BJ (cell line): ENCODE measurements at regions of chr15 and their contacts with region 1.

Region 1: GRCh38 chr15:94119923-94120775 is 111.2 kb upstream of the MCTP2 start:
- DNase-seq: peak; percentile 39
- H3K4me3 ChIP-seq: no peak overlapping the region
- H3K27me3 ChIP-seq: no peaks in the 10 kb centered on the region
- CTCF ChIP-seq: peak; percentile 94

Region 2: DNA sequence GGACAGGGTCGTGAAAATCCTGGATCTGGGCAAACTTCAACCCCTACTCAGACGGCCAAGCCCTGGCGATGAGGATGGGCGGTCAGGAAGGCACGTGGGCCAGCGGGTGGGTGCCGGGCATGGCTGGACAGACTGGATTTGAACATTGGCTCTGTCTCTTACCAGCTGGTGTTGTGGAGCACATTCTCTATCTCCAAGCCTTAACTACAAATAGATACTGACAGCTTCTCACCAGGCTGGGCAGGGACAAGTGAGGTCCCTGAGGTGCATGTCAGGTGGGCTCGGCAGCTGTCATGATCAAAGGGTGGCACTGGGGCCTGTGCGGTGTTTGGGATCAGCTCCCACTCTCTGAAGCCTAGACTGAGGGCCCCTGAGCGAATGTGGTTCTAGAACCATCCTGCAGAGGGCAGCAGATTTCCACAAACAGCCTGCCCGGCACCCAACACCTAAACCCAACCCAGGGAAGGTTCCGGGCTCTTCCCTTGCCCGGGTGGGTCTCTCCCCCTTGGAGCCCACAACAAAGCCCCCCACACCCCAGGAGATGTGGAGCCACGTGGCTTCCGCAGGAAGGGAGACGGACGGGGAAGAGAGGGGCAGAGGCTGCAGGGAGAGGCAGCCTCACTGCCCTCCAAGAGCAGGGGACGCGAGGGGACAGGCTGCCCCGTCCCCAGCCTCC is 1089.6 kb before region 1 on chr15:
- CTCF ChIA-PET with region 1: interaction called, 74 read pairs
- POLR2A ChIA-PET with region 1: interaction called, 4 read pairs
- DNase-seq: no peak
- H3K4me3 ChIP-seq: no peak overlapping the region
- H3K27me3 ChIP-seq: no peaks in the 10 kb centered on the region
- CTCF ChIP-seq: peak; percentile 84

Region 3: GRCh38 chr15:93087825-93088199 is 1032.3 kb before region 1 on chr15:
- CTCF ChIA-PET with region 1: interaction called, 13 read pairs
- POLR2A ChIA-PET with region 1: no interaction called
- DNase-seq: no peak
- H3K4me3 ChIP-seq: no peak overlapping the region
- H3K27me3 ChIP-seq: peaks cover 33% of the 10 kb centered on the region
- CTCF ChIP-seq: peak; percentile 79

Region 4: GRCh38 chr15:93987111-93987467 is 133.1 kb before region 1 on chr15:
- CTCF ChIA-PET with region 1: interaction called, 14 read pairs
- POLR2A ChIA-PET with region 1: no interaction called
- DNase-seq: no peak
- H3K4me3 ChIP-seq: no peak overlapping the region
- H3K27me3 ChIP-seq: no peaks in the 10 kb centered on the region
- CTCF ChIP-seq: no peak

Region 5: GRCh38 chr15:94004697-94005096 is 115.5 kb before region 1 on chr15:
- CTCF ChIA-PET with region 1: interaction called, 66 read pairs
- POLR2A ChIA-PET with region 1: no interaction called
- DNase-seq: no peak
- H3K4me3 ChIP-seq: no peak overlapping the region
- H3K27me3 ChIP-seq: no peaks in the 10 kb centered on the region
- CTCF ChIP-seq: no peak